ENCODE measurements at regions of chr13 and their contacts with region 1.

Region 1: GRCh38 chr13:49436890-49437289 is 7.0 kb downstream of the CAB39L start:
- DNase-seq: peak in 2 of 4 donors; percentile 37 to 51
- ATAC-seq: peak; percentile 79
- H3K4me3 ChIP-seq: no peak overlapping the region
- H3K27ac ChIP-seq: no peak overlapping the region
- H3K4me1 ChIP-seq: no peaks in the 10 kb centered on the region
- H3K27me3 ChIP-seq: no peaks in the 10 kb centered on the region
- CTCF ChIP-seq: peak in 1 of 2 donors; percentile 12

Region 2: DNA sequence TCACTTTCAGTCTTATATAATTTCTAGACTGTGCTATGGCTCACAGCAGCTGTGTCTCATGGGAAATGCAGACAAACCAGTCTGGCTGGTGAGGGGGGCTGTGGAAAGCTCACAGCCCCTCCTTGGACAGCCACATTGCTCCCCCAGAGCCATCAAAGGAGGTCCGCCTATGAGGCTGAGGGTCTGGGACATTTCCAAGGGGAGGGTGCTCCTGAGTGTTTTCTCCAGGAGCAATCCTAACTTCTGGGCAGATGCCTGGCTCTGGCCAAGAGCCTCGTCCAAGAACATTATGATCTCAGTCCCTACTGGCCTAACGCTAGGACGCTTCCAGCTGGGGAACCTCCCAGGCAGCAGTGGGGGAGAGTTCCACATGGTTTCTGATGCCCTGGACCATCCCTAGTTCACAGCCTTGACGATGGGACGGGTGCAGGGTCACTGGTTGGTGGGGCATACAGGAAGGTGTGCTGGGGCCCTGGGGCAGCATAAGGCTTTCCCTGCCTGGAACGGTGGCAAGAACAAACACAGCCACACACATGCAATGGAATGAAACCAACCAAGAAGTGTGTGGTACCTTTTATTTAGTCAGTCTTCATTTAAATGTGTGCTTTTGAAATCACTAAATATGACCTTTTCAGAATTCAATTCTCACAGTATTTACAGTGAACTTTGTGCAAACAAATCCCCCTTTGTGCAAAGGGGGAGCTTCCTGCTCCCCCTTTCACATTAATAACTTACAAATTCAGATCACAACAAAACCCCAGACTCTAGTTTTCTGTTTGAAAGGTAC is 128.6 kb before region 1 on chr13:
- intact Hi-C with region 1: loop called in 1 of 2 experiments (anchors 5 kb)
- DNase-seq: peak; percentile 61 to 92 (median 74)
- ATAC-seq: peak; percentile 82
- H3K4me3 ChIP-seq: no peak overlapping the region
- H3K27ac ChIP-seq: peak overlapping the region; percentile 38 to 81
- H3K4me1 ChIP-seq: peaks cover 4 to 14% of the 10 kb centered on the region in 2 donors
- H3K27me3 ChIP-seq: no peaks in the 10 kb centered on the region
- CTCF ChIP-seq: no peak

Measured in left lung (tissue), 14 donors.